ENCODE measurements at regions of chr1 and their contacts with region 1.

Region 1: GRCh38 chr1:92749024-92749634 is 35.8 kb downstream of the EVI5 start:
- DNase-seq: peak; percentile 74
- H3K4me3 Mint-ChIP-seq: no peak overlapping the region
- H3K27ac Mint-ChIP-seq: no peak overlapping the region
- H3K4me1 Mint-ChIP-seq: peaks cover 19% of the 10 kb centered on the region
- H3K27me3 Mint-ChIP-seq: no peaks in the 10 kb centered on the region
- CTCF ChIP-seq: peak; percentile 60

Region 2: DNA sequence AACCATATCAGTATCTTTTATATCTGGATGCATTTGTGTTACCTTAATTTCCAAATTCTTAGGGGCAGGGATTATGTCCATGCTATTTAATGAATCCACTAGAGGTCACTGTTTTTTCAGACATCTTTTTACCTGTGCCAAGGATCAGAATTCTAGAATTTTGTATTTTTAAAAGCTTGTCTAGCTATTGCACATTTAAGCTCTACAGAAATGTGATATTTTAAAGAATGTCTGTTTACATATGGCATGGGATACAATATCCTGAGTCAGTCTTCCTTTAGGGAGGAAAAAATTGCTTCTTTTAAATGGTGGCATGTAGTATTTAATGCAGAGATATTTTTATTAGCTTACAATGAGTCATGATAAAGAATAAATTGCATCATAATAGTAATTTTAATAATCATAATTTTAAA is 438.9 kb before region 1 on chr1:
- CTCF ChIA-PET with region 1: interaction called, 4 read pairs
- POLR2A ChIA-PET with region 1: no interaction called
- intact Hi-C with region 1: loop called (anchors 5 kb)
- DNase-seq: peak; percentile 37
- H3K4me3 Mint-ChIP-seq: no peak overlapping the region
- H3K27ac Mint-ChIP-seq: no peak overlapping the region
- H3K4me1 Mint-ChIP-seq: no peaks in the 10 kb centered on the region
- H3K27me3 Mint-ChIP-seq: no peaks in the 10 kb centered on the region
- CTCF ChIP-seq: peak; percentile 63

Region 3: DNA sequence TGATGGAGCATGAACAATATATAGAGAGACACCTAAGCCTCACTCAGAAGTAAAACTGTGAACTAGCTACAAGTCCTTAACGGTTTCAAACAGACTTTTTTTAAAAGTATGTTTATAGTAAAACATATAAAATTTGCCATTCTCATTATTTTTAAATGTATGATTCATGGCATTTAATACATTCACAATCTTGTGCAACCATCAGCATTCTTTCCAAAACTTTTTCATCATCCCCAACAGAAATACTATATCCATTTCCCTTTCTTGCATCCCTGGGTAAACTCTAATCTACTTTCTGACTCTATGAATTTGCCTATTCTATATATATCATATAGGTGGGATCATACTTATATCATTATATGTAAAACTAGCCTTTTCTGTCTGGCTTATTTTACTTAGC is 10.2 kb after region 1 on chr1:
- CTCF ChIA-PET with region 1: interaction called, 14 read pairs
- POLR2A ChIA-PET with region 1: no interaction called
- intact Hi-C with region 1: no loop called
- DNase-seq: peak; percentile 16
- H3K4me3 Mint-ChIP-seq: no peak overlapping the region
- H3K27ac Mint-ChIP-seq: no peak overlapping the region
- H3K4me1 Mint-ChIP-seq: peaks cover 4% of the 10 kb centered on the region
- H3K27me3 Mint-ChIP-seq: no peaks in the 10 kb centered on the region
- CTCF ChIP-seq: no peak

Region 4: GRCh38 chr1:92778376-92778775 is 29.2 kb after region 1 on chr1:
- CTCF ChIA-PET with region 1: interaction called, 13 read pairs
- POLR2A ChIA-PET with region 1: interaction called, 3 read pairs
- intact Hi-C with region 1: no loop called
- DNase-seq: no peak
- H3K4me3 Mint-ChIP-seq: no peak overlapping the region
- H3K27ac Mint-ChIP-seq: no peak overlapping the region
- H3K4me1 Mint-ChIP-seq: peaks cover 4% of the 10 kb centered on the region
- H3K27me3 Mint-ChIP-seq: no peaks in the 10 kb centered on the region
- CTCF ChIP-seq: no peak

Region 5: GRCh38 chr1:92784639-92785500 is 35.7 kb after region 1 on chr1 and contains the start of gene EVI5:
- CTCF ChIA-PET with region 1: interaction called, 12 read pairs
- POLR2A ChIA-PET with region 1: interaction called, 7 read pairs
- intact Hi-C with region 1: loop called (anchors 2 kb)
- DNase-seq: peak; percentile 96
- H3K4me3 Mint-ChIP-seq: peak within 1 kb of the TSS; percentile 87
- H3K27ac Mint-ChIP-seq: peak within 1 kb of the TSS; percentile 96
- H3K4me1 Mint-ChIP-seq: peaks cover 10% of the 10 kb centered on the region
- H3K27me3 Mint-ChIP-seq: no peaks in the 10 kb centered on the region
- CTCF ChIP-seq: no peak
- total RNA-seq, gene EVI5: 23.2 and 25.0 TPM in 2 replicates

Region 6: DNA sequence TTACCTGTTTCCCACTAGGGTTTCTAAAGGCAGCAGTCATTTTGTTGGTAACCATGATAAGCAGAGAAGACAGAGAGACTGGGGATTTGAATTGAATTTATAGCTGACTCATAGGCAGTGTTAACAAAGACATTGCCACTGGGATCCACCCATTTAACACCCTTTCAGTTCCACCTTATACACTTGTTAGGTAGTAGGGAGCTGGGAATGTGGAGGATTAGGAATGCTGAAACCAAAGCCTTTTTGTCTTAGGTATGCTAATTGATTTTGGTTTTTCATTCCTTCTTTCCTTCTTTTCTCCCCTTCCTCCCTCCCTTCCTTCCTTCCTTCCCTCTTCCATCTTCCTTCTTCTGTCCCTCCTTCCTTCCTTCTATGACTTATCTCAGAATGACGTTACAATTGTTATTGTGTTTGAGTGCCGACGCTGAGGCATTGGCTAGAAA is 43.2 kb after region 1 on chr1:
- CTCF ChIA-PET with region 1: interaction called, 11 read pairs
- POLR2A ChIA-PET with region 1: interaction called, 4 read pairs
- intact Hi-C with region 1: no loop called
- DNase-seq: peak; percentile 23
- H3K4me3 Mint-ChIP-seq: no peak overlapping the region
- H3K27ac Mint-ChIP-seq: no peak overlapping the region
- H3K4me1 Mint-ChIP-seq: no peaks in the 10 kb centered on the region
- H3K27me3 Mint-ChIP-seq: no peaks in the 10 kb centered on the region
- CTCF ChIP-seq: no peak

Region 7: DNA sequence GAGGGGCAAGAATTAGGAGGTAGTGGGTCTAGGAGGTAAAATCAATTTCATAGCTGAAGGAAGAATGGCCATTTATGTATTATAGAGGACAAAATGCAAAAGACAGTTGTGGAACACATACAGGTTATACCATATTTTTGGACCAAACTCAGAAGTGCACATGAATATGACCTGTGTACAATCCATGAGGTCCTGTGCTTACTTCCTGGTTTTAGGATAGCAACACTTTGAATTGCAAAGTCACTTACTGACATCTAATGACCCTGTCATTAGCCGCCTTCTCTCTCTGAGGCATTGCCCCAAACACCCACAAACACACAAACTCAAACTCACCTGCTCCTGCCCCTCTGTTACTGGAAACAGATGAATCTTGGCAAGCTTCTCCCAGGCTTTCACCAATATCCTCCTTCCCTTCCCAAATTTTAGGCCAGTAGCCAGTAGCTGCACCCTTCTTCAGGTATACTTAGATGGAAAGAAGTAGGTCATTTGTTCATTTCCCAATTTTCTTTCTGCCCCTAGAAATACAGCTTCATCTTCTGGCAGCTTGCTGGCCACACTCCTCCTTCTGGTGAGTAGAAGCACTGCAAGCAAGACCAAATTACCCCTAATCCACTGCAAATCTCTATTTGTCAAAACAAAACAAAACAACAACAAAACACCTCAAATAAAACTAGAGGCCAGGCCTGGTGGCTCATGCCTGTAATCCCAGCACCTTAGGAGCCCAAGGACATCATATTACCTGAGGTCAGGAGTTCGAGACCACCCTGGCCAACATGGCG is 69.0 kb after region 1 on chr1:
- CTCF ChIA-PET with region 1: interaction called, 61 read pairs
- POLR2A ChIA-PET with region 1: interaction called, 3 read pairs
- intact Hi-C with region 1: loop called (anchors 1 kb)
- DNase-seq: peak; percentile 39
- H3K4me3 Mint-ChIP-seq: no peak overlapping the region
- H3K27ac Mint-ChIP-seq: no peak overlapping the region
- H3K4me1 Mint-ChIP-seq: peaks cover 4% of the 10 kb centered on the region
- H3K27me3 Mint-ChIP-seq: no peaks in the 10 kb centered on the region
- CTCF ChIP-seq: peak; percentile 71

Measured in MCF 10A (cell line).